ENCODE measurements at regions of chr16 and their contacts with region 1.

Region 1: GRCh38 chr16:67155295-67156142 is 4.2 kb downstream of the TRADD start:
- DNase-seq: peak; percentile 74
- H3K27ac ChIP-seq: no peak overlapping the region
- CTCF ChIP-seq: peak; percentile 95

Region 2: DNA sequence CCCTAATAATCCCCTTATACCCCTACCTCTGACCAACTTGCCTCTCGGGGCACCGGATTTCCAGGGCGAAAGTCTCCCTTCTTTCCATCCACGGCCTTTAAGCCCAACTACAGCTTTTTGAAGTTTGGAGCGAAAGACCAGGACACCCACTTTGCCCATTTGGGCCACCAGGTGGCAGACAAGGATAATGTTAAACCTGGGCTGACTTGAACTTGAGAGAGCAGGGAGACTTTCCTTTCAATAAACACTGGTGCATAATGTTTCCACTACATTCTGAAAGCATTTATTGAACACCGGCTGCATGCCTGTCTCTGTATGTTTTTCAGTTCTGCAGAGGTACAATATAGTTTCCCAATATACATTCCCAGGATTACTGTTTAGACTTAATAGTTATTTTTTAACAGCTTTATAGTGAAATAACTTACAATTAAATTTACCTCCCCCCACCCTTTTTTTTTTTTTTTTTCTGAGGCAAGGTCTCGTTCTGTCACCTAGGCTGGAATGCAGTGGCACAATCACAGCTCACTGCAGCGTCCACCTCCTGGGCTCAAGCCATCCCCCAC is 201.3 kb before region 1 on chr16:
- CTCF ChIA-PET with region 1: interaction called, 12 read pairs
- POLR2A ChIA-PET with region 1: no interaction called
- DNase-seq: peak; percentile 82
- H3K27ac ChIP-seq: no peak overlapping the region
- CTCF ChIP-seq: peak; percentile 82

Region 3: GRCh38 chr16:66977341-66978113 is 178.0 kb before region 1 on chr16:
- CTCF ChIA-PET with region 1: interaction called, 11 read pairs
- POLR2A ChIA-PET with region 1: no interaction called
- DNase-seq: peak; percentile 87
- H3K27ac ChIP-seq: no peak overlapping the region
- CTCF ChIP-seq: peak; percentile 93

Region 4: DNA sequence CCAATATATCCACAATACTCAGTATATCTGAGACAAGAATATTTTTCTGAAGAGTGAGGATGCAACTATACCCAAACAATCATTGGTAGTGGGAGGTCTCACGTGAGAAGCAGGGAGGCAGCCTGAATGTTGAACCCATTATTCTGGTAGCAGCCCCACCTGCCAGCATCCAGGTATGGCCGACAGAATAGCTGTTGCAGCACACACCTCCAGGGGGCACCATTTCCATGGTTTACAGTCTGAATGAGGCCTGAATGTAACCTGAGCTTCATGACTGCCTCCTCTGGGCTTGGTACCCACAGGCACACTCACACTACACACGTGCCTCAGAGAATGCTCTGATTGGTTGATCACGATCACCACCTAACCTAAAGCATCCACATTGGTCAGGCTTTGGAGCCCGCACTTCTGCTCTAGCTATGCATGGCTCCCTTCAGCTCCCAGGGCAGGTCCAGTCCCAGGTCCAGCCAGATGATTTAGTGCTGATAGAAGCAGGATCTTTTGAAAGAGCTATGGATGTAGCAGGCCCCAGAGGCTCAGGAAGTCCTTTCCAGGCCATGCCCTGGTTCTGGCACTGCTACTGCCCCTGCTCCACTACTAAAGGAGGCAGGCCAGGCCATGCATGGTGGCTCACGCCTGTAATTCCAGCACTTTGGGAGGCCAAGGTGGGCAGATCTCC is 137.6 kb before region 1 on chr16:
- CTCF ChIA-PET with region 1: interaction called, 27 read pairs
- POLR2A ChIA-PET with region 1: no interaction called
- DNase-seq: peak; percentile 90
- H3K27ac ChIP-seq: peak overlapping the region; percentile 38
- CTCF ChIP-seq: peak; percentile 76

Region 5: GRCh38 chr16:67137605-67138004 is 17.9 kb before region 1 on chr16:
- CTCF ChIA-PET with region 1: interaction called, 13 read pairs
- POLR2A ChIA-PET with region 1: no interaction called
- DNase-seq: no peak
- H3K27ac ChIP-seq: no peak overlapping the region
- CTCF ChIP-seq: no peak

Region 6: GRCh38 chr16:67198238-67198734 is 42.8 kb after region 1 on chr16:
- CTCF ChIA-PET with region 1: interaction called, 10 read pairs
- POLR2A ChIA-PET with region 1: no interaction called
- DNase-seq: peak; percentile 81
- H3K27ac ChIP-seq: peak overlapping the region; percentile 92
- CTCF ChIP-seq: peak; percentile 61

Measured in RWPE1 (cell line).